ENCODE measurements at regions of chr10 and their contacts with region 1.

Region 1: GRCh38 chr10:68955832-68956532 is at the start of gene DDX21:
- DNase-seq: peak; percentile 87 to 96 (median 94)
- H3K4me3 ChIP-seq: peak within 1 kb of the TSS; percentile 69 to 100 (median 95)
- H3K27ac ChIP-seq: peak within 1 kb of the TSS in 56 of 59 donors; percentile 24 to 91 (median 76)
- H3K27me3 ChIP-seq: no peaks in the 10 kb centered on the region
- CTCF ChIP-seq: peak; percentile 31 to 79 (median 62)
- total RNA-seq, gene DDX21: 13.9 to 30.2 (median 19.0) TPM

Region 2: DNA sequence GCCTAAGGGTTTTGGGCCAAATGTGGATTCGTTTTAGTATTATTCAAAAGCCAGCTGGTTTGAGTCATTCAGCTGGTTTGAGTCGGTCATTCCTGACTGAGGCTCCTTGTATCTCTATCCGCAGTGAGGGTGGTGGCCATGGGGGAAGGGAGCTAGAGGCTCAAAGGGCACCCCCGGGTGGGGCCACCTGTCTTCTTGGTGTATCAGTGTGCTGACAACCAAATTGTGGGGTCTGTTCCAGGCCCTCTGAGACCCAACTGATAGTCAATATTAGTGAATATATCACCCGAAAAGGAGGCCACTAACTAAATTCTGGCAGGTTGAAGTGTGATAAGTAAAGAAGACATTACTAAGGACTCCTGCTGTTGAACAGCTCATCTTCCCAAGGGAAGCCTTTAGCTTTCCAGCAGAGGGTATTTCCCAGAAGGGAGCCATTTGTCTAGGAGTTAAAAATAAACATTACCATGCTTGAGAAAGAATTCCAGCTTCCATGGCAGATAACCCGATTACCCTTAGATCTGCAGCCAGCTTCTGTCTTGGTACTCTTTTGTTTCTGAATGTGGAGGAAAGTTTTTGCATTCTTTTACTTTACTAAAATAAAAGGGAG is 84.8 kb before region 1 on chr10:
- intact Hi-C with region 1: no loop called
- DNase-seq: no peak
- H3K4me3 ChIP-seq: no peak overlapping the region
- H3K27ac ChIP-seq: peak overlapping the region in 42 of 59 donors; percentile 0 to 85 (median 49)
- H3K27me3 ChIP-seq: no peaks in the 10 kb centered on the region
- CTCF ChIP-seq: no peak

Region 3: GRCh38 chr10:69179743-69180524 is 224.0 kb after region 1 on chr10 and contains the start of gene SUPV3L1:
- intact Hi-C with region 1: loop called in 1 of 2 experiments (anchors 5 kb)
- DNase-seq: peak; percentile 89 to 100 (median 97)
- H3K4me3 ChIP-seq: peak within 1 kb of the TSS; percentile 73 to 100 (median 99)
- H3K27ac ChIP-seq: peak within 1 kb of the TSS; percentile 94 to 100 (median 99)
- H3K27me3 ChIP-seq: no peaks in the 10 kb centered on the region
- CTCF ChIP-seq: peak in 14 of 56 donors; percentile 6 to 41 (median 19)
- total RNA-seq, gene SUPV3L1: 23.2 to 52.6 (median 39.0) TPM

Region 4: DNA sequence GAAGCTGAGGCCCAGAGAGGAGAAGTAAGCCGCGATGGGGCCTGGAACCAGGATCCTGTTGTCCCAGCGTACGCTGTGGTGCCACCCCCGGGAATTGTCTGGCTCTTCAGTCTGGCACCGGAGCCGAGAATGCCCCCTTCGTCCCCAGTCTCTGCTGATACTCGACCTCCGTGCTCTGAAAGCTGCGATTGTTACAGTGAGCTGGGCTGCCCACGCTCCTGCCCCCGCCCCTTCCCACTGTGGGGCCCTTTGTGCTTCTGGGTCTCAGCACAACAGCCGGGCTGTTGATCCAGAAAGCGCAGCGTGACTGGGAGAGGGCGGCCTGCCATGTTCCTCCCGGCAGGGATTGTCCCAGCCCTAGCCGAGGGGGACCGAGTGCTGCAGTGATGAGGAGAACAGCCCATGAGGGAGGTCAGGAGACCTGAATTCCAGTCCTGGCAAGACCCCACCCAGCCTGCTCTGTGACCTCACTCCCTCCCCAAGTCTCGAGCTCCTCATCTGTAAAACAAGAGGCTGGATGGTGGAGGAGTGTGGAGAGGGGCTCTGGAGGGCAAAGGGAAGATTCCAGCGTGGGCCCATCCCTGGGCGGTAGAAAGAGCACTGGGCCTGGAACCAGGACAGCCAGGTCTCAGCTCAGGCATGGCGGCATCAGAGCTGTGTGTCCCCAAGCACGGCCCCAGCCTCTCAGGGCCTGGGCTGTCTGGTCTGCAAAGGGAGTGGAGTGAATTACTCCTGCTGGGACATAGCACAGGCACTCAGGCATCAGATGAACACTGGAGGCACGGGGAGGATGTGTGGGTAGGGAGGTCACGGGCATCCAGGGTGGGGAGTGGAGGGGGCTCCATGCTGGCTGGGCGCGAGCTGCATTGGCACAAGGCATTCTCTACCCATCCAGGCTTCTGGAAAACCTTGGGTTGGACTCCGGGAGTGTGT is 538.9 kb after region 1 on chr10:
- intact Hi-C with region 1: no loop called
- DNase-seq: peak; percentile 63 to 99 (median 96)
- H3K4me3 ChIP-seq: peak overlapping the region in 13 of 59 donors; percentile 0 to 37 (median 13)
- H3K27ac ChIP-seq: peak overlapping the region; percentile 87 to 100 (median 98)
- H3K27me3 ChIP-seq: no peaks in the 10 kb centered on the region
- CTCF ChIP-seq: peak in 24 of 56 donors; percentile 4 to 39 (median 21)

Measured in dorsolateral prefrontal cortex (tissue), 120 donors.